AG04449 (cell line): ENCODE measurements at regions of chr15 and their contacts with region 1.

Region 1: DNA sequence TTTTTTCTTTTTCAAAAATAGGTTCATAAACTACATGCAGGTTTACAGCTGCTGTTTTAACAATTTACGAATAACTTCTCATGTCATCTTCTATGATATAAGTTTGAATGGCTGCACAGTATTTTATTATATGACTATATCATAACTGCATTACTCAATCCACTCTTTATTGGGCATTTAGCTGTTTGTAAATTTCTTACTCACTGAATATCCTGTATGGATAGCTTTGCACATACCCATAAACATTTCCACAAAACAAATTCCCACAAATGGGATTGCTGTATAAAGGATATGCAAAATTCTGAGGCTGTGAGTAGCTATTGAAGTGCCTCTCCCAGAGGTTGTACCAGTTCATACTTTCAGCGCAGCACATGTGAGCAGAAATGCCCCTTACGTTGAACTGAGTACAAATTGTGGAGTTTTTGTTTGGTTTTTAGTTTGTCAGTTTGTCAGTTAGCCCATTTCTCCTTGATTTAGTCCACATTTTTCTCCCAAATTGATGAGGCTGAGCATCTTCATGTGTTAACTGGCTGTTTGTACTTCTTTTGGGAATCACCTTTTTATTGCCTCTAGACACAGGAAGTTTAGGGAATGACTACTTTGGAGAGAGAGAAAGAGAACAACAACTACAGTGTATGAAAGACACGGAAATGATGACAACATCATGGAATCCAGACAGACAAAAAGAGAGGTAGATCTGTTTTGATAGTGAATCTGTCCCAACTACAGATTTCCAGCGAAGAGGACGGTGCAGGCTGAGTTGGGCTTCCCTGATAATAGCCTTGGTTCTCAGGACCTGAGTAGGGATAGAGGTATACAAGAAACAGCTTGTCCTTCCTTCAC is 24.8 kb downstream of the TTC23 start:
- DNase-seq: no peak
- H3K4me3 ChIP-seq: no peak overlapping the region
- CTCF ChIP-seq: no peak

Region 2: GRCh38 chr15:99213187-99213811 is 11.3 kb before region 1 on chr15:
- CTCF ChIA-PET with region 1: interaction called, 89 read pairs
- POLR2A ChIA-PET with region 1: no interaction called
- DNase-seq: peak; percentile 26
- H3K4me3 ChIP-seq: no peak overlapping the region
- CTCF ChIP-seq: peak; percentile 74